Ovary (tissue), 10 donors: ENCODE measurements at regions of chr11 and their contacts with region 1.

Region 1: DNA sequence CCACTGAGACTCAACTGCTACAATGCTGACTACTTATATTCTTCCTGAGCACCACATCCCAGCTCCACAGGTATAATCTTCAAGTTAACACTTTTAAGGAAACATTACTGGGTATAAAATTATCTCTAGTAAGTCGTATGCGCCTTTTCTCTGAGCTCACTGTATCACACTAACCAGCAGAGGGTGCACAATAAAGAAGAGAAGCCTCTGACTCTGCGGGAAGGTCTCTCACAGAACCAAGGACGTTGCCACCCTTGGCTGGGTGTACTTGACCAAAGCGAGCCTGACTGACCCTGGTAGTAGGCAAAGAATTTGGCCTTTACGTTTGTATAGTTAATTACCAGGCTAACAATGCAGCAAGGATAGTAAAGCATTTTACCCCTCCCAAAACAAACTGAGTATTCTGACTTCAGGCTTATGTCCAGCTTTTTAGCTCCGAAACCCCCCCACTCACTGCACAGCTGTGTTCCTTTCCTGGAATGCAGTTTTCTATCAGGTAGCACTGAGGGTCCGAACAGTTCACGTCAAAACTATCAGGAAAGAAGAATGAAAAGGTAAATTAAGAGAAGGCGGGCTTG is at the start of gene BTBD18:
- DNase-seq: no peak
- H3K4me3 ChIP-seq: no peak within 1 kb of the TSS
- H3K27ac ChIP-seq: no peak within 1 kb of the TSS
- H3K4me1 ChIP-seq: no peaks in the 10 kb centered on the region
- H3K27me3 ChIP-seq: no peaks in the 10 kb centered on the region
- CTCF ChIP-seq: no peak
- EP300 ChIP-seq: no peak
- POLR2A ChIP-seq: no peak
- total RNA-seq, gene BTBD18: not detected

Region 2: GRCh38 chr11:57800444-57801182 is 48.8 kb after region 1 on chr11:
- intact Hi-C with region 1: loop called in 2 of 4 experiments (anchors 10 kb)
- DNase-seq: no peak
- H3K4me3 ChIP-seq: no peak overlapping the region
- H3K27ac ChIP-seq: no peak overlapping the region
- H3K4me1 ChIP-seq: peaks cover 3% of the 10 kb centered on the region
- H3K27me3 ChIP-seq: no peaks in the 10 kb centered on the region
- CTCF ChIP-seq: peak; percentile 76 to 88 (median 81)
- EP300 ChIP-seq: no peak
- POLR2A ChIP-seq: no peak